ENCODE measurements at regions of chr15 and their contacts with region 1.

Region 1: DNA sequence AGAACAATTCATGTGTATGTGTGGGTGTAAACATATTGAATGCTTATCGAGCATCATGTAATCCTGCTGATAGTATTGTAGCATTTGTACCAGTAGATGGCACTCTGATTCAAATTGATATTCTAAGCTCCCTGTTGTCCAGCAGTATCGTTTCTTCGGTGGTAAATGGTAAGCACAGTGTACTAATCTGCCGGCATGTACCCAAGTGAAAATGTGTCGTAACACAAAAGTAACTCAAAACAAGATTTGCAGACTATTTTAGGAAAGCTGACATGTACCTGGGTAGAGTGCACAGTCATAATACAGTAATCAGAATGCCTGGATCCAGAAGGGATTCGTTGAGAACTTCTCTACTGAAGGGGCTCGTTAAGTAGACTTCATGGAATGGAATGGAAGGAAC is 31.7 kb upstream of the MNS1 start:
- DNase-seq: peak in 1 of 2 donors; percentile 6
- ATAC-seq: peak in 6 of 8 donors; percentile 61 to 85 (median 80)
- H3K4me3 ChIP-seq: no peak overlapping the region
- H3K27ac ChIP-seq: no peak overlapping the region
- H3K4me1 ChIP-seq: peaks cover 0 to 4% (median 0%) of the 10 kb centered on the region in 9 donors
- H3K27me3 ChIP-seq: peaks cover 0 to 5% (median 0%) of the 10 kb centered on the region in 7 donors
- CTCF ChIP-seq: peak; percentile 24 to 85 (median 75)

Region 2: DNA sequence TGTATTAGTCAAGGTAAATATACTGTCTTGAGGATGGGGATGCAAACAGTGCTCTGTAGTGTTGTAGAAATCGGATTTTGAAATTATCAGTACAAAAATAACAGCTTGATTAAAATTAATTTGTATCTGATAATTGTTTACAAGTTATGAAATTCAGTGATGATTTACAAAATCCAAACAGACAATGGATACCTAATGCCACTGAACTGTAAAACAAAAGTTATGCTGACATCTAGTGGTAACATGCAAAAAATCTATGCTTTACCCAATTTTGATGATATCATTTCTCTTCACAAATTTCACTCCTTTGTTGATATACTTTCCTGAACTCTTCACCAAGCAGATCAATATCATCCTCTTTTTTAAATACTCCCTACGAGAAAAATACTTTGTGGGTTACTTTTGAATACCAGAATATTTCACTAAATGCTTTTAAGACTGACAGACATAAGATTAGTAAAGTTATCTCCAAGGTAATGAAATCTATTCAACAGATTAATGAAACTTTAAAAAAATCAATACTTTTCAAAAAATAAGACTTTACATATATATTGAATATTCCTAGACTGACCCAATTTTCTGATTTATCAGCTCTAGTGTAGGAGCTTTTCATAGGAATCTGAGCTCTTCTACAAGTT is 67.7 kb before region 1 on chr15:
- intact Hi-C with region 1: no loop called
- DNase-seq: no peak
- ATAC-seq: no peak
- H3K4me3 ChIP-seq: no peak overlapping the region
- H3K27ac ChIP-seq: no peak overlapping the region
- H3K4me1 ChIP-seq: no peaks in the 10 kb centered on the region
- H3K27me3 ChIP-seq: no peaks in the 10 kb centered on the region
- CTCF ChIP-seq: peak in 7 of 9 donors; percentile 37 to 67 (median 54)

Region 3: GRCh38 chr15:56552668-56553067 is 56.0 kb after region 1 on chr15:
- intact Hi-C with region 1: no loop called
- DNase-seq: no peak
- ATAC-seq: no peak
- H3K4me3 ChIP-seq: no peak overlapping the region
- H3K27ac ChIP-seq: no peak overlapping the region
- H3K4me1 ChIP-seq: no peaks in the 10 kb centered on the region
- H3K27me3 ChIP-seq: peaks cover 0 to 6% (median 0%) of the 10 kb centered on the region in 7 donors
- CTCF ChIP-seq: no peak

Region 4: GRCh38 chr15:56608140-56608778 is 111.6 kb after region 1 on chr15:
- intact Hi-C with region 1: loop called in 1 of 10 experiments (anchors 10 kb)
- DNase-seq: no peak
- ATAC-seq: no peak
- H3K4me3 ChIP-seq: no peak overlapping the region
- H3K27ac ChIP-seq: no peak overlapping the region
- H3K4me1 ChIP-seq: no peaks in the 10 kb centered on the region
- H3K27me3 ChIP-seq: no peaks in the 10 kb centered on the region
- CTCF ChIP-seq: no peak

Region 5: DNA sequence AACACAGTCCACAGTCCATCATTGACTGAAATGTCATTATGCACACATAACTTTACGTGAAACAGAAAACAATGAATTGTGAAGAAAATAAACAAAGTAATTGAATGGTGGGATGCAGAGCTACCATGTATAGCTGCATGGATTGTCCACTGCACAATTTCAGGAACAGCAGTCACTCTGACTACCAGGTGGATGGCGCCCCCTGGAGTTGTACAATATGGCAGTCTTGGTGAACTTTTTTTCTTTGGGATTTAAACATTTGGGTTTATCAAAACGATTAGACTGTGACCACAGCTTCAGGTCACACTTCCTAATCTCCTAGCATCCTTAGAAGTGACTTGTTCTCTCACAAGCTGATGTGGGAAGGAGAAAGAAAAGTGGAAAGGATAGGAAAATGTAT is 372.9 kb after region 1 on chr15:
- intact Hi-C with region 1: loop called in 8 of 10 experiments (anchors 2 to 10 kb)
- DNase-seq: peak; percentile 24 to 36
- ATAC-seq: no peak
- H3K4me3 ChIP-seq: no peak overlapping the region
- H3K27ac ChIP-seq: no peak overlapping the region
- H3K4me1 ChIP-seq: peaks cover 0 to 9% (median 0%) of the 10 kb centered on the region in 9 donors
- H3K27me3 ChIP-seq: no peaks in the 10 kb centered on the region
- CTCF ChIP-seq: peak in 8 of 9 donors; percentile 25 to 69 (median 58)

Region 6: GRCh38 chr15:57306161-57306943 is 809.7 kb after region 1 on chr15:
- intact Hi-C with region 1: loop called in 8 of 10 experiments (anchors 5 to 10 kb)
- DNase-seq: peak; percentile 87 to 92
- ATAC-seq: peak; percentile 88 to 95 (median 91)
- H3K4me3 ChIP-seq: peak overlapping the region; percentile 19 to 84 (median 58)
- H3K27ac ChIP-seq: peak overlapping the region in 6 of 10 donors; percentile 30 to 54 (median 34)
- H3K4me1 ChIP-seq: peaks cover 0 to 18% (median 12%) of the 10 kb centered on the region in 9 donors
- H3K27me3 ChIP-seq: no peaks in the 10 kb centered on the region
- CTCF ChIP-seq: peak; percentile 82 to 96 (median 91)

Region 7: DNA sequence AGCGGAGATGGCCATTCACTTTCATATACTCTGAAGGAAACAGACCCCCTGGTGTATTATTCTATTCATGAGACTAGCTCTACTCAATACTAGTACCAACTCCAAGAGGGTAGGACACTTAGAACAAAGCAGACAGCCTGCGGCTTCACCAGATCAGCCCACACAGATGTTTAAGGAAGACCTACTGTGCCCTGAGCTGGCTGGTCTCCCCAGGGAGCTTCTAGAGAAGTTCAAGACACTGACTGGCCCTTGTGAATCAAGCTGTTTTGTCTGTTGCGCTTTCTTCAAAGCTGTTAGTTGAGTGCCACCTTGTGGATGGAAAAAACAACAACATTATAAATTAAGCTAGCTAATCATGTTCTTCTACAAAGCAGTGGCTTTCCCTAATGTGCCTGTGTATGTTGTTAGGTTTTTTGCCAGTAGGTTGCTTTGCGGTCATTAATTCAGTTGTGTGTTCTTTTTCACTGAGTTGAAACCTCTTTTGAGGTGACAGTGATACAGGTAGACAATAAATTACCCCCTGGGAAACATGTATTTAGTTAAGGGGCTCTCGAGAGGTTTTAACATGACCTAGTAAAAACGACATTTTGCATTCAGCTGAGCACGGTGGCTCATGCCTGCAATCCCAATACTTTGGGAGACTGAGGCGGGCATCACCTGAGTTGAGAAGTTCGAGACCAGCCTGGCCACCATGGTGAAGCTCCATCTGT is 1030.9 kb after region 1 on chr15:
- intact Hi-C with region 1: loop called in 6 of 10 experiments (anchors 5 to 10 kb)
- DNase-seq: peak in 1 of 2 donors; percentile 58
- ATAC-seq: peak; percentile 62 to 78 (median 71)
- H3K4me3 ChIP-seq: no peak overlapping the region
- H3K27ac ChIP-seq: no peak overlapping the region
- H3K4me1 ChIP-seq: peaks cover 0 to 18% (median 3%) of the 10 kb centered on the region in 9 donors
- H3K27me3 ChIP-seq: no peaks in the 10 kb centered on the region
- CTCF ChIP-seq: peak; percentile 49 to 81 (median 66)

Measured in heart right ventricle (tissue), 16 donors.